Head of caudate nucleus (tissue), 42 donors: ENCODE measurements at regions of chr20 and their contacts with region 1.

Region 1: GRCh38 chr20:8131598-8132483 is at the start of gene PLCB1:
- DNase-seq: peak; percentile 61 to 95 (median 88)

Region 2: DNA sequence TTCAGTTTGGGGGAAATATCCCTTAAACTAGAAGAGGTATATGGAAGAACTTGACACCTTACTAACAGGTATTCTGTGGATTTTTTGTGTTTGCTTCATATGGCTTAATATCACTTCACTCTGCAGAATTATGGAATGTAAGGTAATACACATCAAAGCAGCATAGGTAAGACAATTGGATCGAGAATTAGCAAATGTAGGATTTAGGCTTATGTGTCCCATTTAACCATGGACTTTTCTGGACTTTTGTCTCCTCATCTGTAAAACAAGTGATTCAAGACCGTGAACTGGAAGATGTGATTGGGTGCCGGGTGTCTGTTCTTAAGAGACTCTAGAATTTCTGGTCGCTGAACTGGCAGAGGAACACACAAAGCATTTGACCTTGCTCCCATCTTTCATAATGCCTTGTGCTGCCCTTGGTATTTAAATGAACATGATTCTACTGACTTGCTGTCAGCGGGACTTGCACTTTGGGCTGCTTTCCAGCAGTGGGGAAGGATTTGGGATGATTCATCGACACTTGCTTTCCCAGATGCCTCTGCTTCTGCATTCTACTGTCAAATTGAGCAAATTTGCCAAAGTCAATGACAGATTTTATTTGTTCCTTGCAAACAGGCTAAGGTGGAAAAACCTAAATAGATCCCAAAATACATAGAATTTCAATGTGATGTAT is 200.0 kb after region 1 on chr20:
- intact Hi-C with region 1: no loop called
- DNase-seq: peak in 41 of 42 donors; percentile 20 to 90 (median 58)

Region 3: DNA sequence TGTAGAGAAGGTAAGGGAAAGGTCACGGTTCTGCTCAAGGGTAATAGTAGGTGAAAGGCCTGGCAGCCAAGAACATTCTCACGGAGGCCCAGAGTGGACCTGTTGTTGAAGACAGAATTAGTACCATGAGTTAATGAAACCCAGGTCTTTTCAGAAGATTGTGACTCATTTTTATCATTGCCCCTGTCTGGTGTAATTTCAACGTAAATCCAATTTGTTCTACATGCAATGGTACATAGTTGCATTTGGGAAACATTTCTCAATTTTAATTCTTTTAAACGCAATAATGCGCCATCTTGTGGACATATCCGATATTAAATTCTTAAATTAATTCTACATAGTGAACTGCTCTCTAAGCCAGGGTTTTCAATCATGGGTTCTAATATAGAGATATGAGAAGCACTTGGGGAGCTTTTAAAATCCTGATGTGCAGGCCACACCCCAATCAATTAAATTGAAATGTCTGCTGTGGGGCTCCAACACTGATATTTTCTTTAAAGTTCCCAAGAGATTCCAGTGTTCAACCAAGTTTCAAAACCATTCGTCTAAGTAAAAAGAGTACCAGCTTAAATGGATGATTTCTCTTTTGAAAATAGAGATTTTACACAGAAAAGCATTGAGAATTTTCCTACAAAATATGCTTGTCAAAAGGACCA is 257.7 kb after region 1 on chr20:
- intact Hi-C with region 1: loop called (anchors 5 kb)
- DNase-seq: no peak